ENCODE measurements at regions of chr9 and their contacts with region 1.

Region 1: GRCh38 chr9:114681594-114682332 is at the start of gene TEX48:
- DNase-seq: peak; percentile 74
- H3K4me3 Mint-ChIP-seq: no peak within 1 kb of the TSS
- H3K27ac Mint-ChIP-seq: peak within 1 kb of the TSS; percentile 94
- H3K4me1 Mint-ChIP-seq: peaks cover 67% of the 10 kb centered on the region
- H3K27me3 Mint-ChIP-seq: peaks cover 5% of the 10 kb centered on the region
- total RNA-seq, gene TEX48: 0.41 and 0.68 TPM in 2 replicates

Region 2: DNA sequence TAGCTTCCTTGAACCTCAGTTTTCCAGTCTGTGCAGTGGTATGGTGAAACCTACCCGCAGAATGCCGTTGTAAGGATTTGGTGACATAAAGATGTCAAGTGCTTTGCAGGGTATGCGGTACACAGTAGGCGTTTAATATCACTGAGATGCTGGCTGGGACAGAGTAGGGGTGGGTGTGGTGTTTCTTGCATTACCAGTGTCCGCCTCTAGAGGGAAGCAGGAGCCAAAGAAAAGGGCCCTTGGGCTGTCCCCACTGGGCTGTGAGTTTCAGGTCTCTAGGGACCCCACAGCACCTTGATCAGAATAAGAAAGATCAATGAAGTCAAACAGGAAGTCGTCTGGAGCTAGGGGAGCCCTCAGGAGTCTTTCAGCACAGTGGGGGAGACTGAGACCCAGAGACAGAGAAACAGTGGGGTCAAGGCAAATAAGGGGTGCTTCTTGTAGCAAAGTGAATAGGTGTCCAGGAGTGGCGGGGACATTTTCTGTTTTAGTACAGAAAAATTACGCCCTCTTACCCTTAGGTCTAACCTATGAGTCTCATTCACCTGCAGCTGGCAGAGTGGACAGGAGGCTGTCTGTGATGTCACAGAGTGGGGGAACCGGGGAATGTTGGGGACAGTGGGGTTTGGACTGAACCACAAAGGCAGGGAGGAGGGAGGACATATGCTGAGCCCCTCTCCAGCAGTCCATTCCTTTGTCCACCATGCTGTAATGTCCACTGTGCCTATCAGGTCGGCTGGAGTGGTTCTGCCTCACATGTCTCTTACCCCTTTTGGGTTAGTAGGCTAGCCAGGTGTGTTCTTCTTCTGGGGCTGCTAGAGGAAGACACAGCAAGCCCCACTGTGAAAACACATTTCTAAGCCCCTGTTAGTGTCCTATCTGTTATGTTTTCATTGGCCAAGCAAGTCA is 19.4 kb before region 1 on chr9:
- intact Hi-C with region 1: loop called (anchors 2 kb)
- DNase-seq: peak; percentile 55
- H3K4me3 Mint-ChIP-seq: no peak overlapping the region
- H3K27ac Mint-ChIP-seq: no peak overlapping the region
- H3K4me1 Mint-ChIP-seq: peaks cover 10% of the 10 kb centered on the region
- H3K27me3 Mint-ChIP-seq: peaks cover 15% of the 10 kb centered on the region

Region 3: DNA sequence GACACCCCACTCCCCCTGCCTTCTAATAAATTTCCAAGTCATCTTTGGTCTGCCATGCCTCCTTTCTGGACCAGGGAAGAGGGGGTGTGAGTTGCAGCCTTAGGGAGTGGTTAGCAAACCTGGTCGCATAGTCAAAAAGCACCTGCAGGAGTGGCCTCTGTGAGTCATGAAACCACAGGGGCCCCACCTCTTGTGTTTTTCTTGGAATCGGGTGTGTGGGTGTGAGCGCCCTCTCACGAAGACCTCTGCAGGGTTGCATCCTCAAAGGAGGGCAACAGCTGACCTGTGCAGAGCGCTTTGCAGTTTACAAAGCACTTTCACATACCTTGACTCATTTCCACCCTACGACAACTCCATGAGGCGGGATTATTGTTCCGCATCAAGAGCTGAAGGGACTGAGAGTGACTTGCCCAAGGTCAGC is 37.0 kb after region 1 on chr9:
- intact Hi-C with region 1: loop called (anchors 5 kb)
- DNase-seq: peak; percentile 93
- H3K4me3 Mint-ChIP-seq: peak overlapping the region; percentile 38
- H3K27ac Mint-ChIP-seq: peak overlapping the region; percentile 94
- H3K4me1 Mint-ChIP-seq: peaks cover 74% of the 10 kb centered on the region
- H3K27me3 Mint-ChIP-seq: no peaks in the 10 kb centered on the region

Region 4: DNA sequence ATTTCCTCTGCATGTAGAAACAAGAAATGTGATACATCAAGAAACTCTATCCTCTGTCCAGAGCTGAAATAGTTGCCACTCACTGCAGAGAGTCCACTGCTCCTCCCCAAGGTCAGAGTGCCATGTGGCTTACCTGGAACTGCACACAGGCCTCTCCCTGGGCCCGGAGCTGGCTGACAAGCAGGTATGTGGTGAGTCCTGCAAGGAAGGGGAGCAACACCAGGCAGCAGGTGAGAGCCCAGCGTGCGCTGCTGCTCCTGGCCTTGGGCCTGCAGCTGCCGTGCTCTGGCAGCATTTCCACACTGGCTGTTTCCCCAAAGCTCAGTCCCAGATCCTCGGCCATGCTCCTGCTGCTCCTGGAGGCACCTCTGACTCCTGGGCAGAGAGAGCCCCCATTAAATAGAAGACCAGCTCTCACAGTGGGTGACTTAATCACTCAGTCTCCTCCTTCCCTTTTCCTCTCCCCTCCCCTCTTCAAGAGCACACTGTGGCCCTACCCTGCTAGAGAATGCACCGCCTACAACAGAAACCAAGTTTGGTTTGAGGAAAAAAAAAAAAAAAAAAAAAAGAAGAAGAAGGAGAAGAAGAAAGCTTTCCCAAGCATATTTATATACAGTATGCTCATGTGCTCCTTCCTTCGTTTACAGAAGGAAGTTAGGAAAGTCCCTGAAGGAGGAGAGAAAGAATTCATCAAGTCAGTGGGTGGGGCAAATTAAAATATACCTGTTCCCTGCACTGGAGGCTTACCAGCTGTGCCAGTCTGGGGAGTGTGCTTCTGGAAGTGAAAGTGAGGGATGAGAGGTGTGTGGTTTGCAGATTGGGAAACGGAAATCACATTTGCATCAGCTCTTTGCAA is 124.1 kb after region 1 on chr9 and contains the start of gene TNFSF15:
- intact Hi-C with region 1: loop called (anchors 5 kb)
- DNase-seq: peak; percentile 22
- H3K4me3 Mint-ChIP-seq: peak within 1 kb of the TSS; percentile 10
- H3K27ac Mint-ChIP-seq: peak within 1 kb of the TSS; percentile 30
- H3K4me1 Mint-ChIP-seq: peaks cover 28% of the 10 kb centered on the region
- H3K27me3 Mint-ChIP-seq: peaks cover 31% of the 10 kb centered on the region
- total RNA-seq, gene TNFSF15: 0.25 and 0.28 TPM in 2 replicates

Region 5: DNA sequence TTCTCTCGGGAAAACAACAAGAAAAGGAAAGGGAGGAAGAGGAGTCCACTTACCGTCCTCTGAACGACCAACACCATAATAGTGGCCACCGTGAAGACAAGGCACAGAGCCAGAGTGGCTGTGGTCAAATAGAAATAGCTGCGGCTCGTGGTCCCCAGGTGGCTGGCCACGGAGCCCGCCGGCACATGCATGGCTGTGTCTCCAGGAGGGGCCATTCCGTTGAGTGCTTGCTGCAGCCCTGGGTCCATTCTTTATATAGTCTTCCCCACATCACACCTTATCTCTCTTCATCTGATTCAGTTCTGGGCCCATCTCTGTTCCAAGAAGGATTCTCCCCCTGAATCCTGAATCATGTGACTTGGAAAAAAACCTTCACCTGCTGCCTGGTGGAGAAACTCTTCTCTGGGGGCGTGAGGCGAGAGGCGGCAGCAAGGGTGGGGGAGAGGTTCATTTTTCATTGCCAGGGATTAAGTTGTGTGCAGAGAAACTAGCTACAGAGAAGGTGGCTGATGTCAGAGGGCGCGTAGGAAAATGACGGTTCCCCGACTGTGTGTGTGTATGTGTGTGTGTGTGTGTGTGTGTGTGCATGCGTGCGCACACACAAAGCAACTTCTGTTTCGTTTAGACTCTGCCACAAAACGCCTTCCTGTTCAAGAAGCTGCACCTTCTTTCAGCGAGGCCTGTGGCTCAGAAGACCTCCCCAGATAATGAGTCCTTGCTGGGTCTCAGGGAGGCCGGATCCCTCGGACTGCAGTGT is 248.5 kb after region 1 on chr9 and contains the start of gene TNFSF8:
- intact Hi-C with region 1: loop called (anchors 1 kb)
- DNase-seq: peak; percentile 79
- H3K4me3 Mint-ChIP-seq: peak within 1 kb of the TSS; percentile 98
- H3K27ac Mint-ChIP-seq: peak within 1 kb of the TSS; percentile 98
- H3K4me1 Mint-ChIP-seq: peaks cover 47% of the 10 kb centered on the region
- H3K27me3 Mint-ChIP-seq: no peaks in the 10 kb centered on the region
- total RNA-seq, gene TNFSF8: 73.6 and 82.3 TPM in 2 replicates

Region 6: GRCh38 chr9:115395511-115396021 is 713.8 kb after region 1 on chr9:
- intact Hi-C with region 1: loop called (anchors 10 kb)
- DNase-seq: no peak
- H3K4me3 Mint-ChIP-seq: no peak overlapping the region
- H3K27ac Mint-ChIP-seq: no peak overlapping the region
- H3K4me1 Mint-ChIP-seq: peaks cover 2% of the 10 kb centered on the region
- H3K27me3 Mint-ChIP-seq: no peaks in the 10 kb centered on the region

Measured in activated T-helper 2 cell treated with anti-CD3 and anti-CD28 coated beads, Interferon-gamma antibody, Interleukin-2, Interleukin-4, amounts not matched to agents 10 μg/mL and 5 μg/mL and 100 μg/mL, durations not matched to agents 14 hours and 24 hours and 36 hours (primary cell).